Activated B cell treated with CpG ODN at 0.5 μM for 24 hours (primary cell): ENCODE measurements at regions of chr6 and their contacts with region 1.

Region 1: DNA sequence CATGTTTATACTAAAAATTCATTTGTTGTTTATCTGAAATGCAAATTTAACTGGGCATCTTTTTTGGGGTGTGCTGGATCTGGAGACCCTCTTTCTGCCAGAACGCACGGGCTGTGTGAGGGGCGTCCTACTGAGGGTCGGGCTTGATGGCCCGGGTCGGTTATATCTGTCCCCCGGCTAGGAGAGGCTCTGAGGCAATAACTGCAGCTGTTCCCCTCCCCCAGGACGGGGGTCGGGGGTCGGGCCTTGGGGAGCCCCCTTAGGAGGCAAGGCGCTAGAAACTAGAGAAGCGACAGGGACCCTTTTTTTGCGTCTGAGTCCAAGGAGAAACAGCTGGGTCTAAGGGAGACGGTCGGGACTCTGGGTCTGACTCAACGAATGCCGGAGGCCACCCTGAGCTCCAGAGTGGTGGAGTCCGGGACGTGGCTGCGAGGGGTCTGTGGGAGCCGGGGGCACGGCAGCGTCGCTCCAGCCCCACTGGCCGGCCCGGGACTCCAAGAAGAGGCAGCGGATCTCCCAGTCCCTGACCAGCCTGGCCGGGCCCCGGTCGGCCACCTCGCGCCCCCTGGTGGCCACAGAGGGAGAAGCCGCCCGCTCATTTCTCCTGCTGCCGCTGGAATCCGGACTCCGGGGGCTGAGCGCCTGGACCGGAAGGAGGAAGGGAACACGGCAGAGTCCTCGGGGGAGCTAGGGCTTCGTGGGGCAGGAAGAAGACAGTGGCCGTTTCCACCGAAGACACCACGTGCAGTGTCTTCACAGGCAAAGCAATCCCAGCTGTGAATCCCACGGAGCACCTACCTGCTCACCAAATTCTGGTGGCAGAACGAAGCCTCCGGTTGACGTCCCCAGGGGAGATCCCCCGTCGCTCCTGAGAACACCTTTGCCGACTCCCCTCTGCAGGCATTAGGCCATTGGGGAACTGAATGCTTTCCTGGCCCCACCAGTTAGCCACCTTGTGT is 24.0 kb upstream of the SCML4 start:
- DNase-seq: peak; percentile 82
- ATAC-seq: peak; percentile 89
- H3K4me3 Mint-ChIP-seq: peak overlapping the region; percentile 81
- H3K27ac Mint-ChIP-seq: no peak overlapping the region
- H3K4me1 Mint-ChIP-seq: peaks cover 16% of the 10 kb centered on the region
- H3K27me3 Mint-ChIP-seq: peaks cover 4% of the 10 kb centered on the region
- CTCF ChIP-seq: peak; percentile 99

Region 2: DNA sequence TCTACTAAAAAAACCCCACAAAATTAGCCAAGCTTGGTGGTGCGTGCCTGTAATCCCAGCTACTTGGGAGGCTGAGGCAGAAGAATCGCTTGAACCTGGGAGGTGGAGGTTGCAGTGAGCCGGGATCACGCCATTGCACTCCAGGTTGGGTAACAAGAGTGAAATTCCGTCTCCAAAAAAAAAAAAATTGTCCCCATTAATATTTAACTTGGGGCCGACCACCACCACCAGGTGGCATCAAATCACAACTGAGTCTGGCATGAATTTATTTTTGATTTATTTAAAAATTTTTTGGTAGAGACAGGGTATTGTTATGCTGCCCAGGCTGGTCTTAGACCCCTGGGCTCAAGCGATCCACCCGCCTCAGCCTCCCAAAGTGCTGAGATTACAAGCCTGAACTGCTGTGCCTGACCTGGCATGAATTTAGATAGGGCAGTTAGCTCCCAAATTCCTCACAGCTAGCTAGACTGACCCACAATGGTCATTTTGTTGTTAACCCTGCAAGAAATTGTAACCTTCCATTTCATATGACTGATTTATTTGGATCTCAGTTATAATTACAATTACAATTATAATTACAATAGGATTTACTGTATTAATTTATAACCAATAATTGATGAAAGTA is 715.7 kb before region 1 on chr6:
- CTCF ChIA-PET with region 1: interaction called, 7 read pairs
- POLR2A ChIA-PET with region 1: no interaction called
- intact Hi-C with region 1: loop called (anchors 1 kb)
- DNase-seq: no peak
- ATAC-seq: no peak
- H3K4me3 Mint-ChIP-seq: no peak overlapping the region
- H3K27ac Mint-ChIP-seq: no peak overlapping the region
- H3K4me1 Mint-ChIP-seq: peaks cover 3% of the 10 kb centered on the region
- H3K27me3 Mint-ChIP-seq: no peaks in the 10 kb centered on the region
- CTCF ChIP-seq: no peak

Region 3: GRCh38 chr6:107704347-107705013 is 143.6 kb before region 1 on chr6:
- CTCF ChIA-PET with region 1: interaction called, 15 read pairs
- POLR2A ChIA-PET with region 1: no interaction called
- intact Hi-C with region 1: loop called (anchors 1 kb)
- DNase-seq: no peak
- ATAC-seq: no peak
- H3K4me3 Mint-ChIP-seq: no peak overlapping the region
- H3K27ac Mint-ChIP-seq: no peak overlapping the region
- H3K4me1 Mint-ChIP-seq: peaks cover 2% of the 10 kb centered on the region
- H3K27me3 Mint-ChIP-seq: peaks cover 2% of the 10 kb centered on the region
- CTCF ChIP-seq: peak; percentile 88

Region 4: GRCh38 chr6:107800564-107801164 is 47.5 kb before region 1 on chr6:
- CTCF ChIA-PET with region 1: interaction called, 4 read pairs
- POLR2A ChIA-PET with region 1: no interaction called
- intact Hi-C with region 1: loop called (anchors 1 kb)
- DNase-seq: no peak
- ATAC-seq: no peak
- H3K4me3 Mint-ChIP-seq: no peak overlapping the region
- H3K27ac Mint-ChIP-seq: no peak overlapping the region
- H3K4me1 Mint-ChIP-seq: no peaks in the 10 kb centered on the region
- H3K27me3 Mint-ChIP-seq: no peaks in the 10 kb centered on the region
- CTCF ChIP-seq: no peak

Region 5: GRCh38 chr6:107820338-107821261 is 27.5 kb before region 1 on chr6:
- CTCF ChIA-PET with region 1: interaction called, 11 read pairs
- POLR2A ChIA-PET with region 1: no interaction called
- intact Hi-C with region 1: loop called (anchors 1 kb)
- DNase-seq: no peak
- ATAC-seq: peak; percentile 23
- H3K4me3 Mint-ChIP-seq: peak overlapping the region; percentile 86
- H3K27ac Mint-ChIP-seq: peak overlapping the region; percentile 85
- H3K4me1 Mint-ChIP-seq: peaks cover 74% of the 10 kb centered on the region
- H3K27me3 Mint-ChIP-seq: no peaks in the 10 kb centered on the region
- CTCF ChIP-seq: no peak